ENCODE measurements at regions of chr14 and their contacts with region 1.

Region 1: GRCh38 chr14:69726761-69727511 is 40.0 kb upstream of the SRSF5 start:
- DNase-seq: peak; percentile 75 to 84 (median 80)
- ATAC-seq: peak; percentile 98
- H3K4me3 ChIP-seq: peak overlapping the region; percentile 32
- H3K27ac ChIP-seq: no peak overlapping the region
- H3K4me1 ChIP-seq: peaks cover 0 to 9% of the 10 kb centered on the region in 2 experiments; a peak in 3 of 5 replicates
- H3K27me3 ChIP-seq: no peaks in the 10 kb centered on the region
- CTCF ChIP-seq: peak; percentile 88 to 93 (median 89)
- EP300 ChIP-seq: no peak
- POLR2A ChIP-seq: no peak
- RAD21 ChIP-seq: peak; percentile 95 to 98

Region 2: DNA sequence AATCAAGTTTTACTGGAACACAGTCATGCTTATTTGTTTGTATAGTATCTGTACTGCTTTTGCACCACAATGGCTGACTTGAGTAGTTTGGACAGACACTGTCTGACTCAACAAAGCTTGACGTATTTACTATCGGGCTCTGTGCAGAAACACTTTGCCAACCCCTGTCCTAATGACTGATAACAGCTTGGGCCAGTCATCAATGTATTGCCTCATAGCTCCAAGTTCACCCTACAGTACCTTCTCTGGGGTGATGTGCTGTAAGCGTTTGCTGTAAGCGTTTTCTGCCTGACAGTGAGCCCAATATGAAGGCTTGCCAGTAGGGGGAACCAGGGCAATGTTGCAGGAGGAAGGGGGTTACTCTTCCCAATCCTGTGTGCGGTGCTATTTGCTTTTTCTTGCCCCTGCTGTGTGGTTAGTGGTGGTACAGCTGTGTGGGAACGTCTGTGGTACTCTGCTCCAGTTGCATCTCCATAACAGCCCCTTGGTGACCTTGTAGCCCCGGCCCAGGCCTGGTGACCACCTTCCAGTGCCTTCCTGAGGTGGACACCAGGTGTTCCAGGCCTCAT is 146.8 kb before region 1 on chr14:
- CTCF ChIA-PET with region 1: interaction called, 47 read pairs
- POLR2A ChIA-PET with region 1: no interaction called
- in situ Hi-C with region 1: loop called (anchors 5 kb)
- intact Hi-C with region 1: loop called (anchors 1 kb)
- DNase-seq: peak; percentile 50 to 73 (median 56)
- ATAC-seq: peak; percentile 96
- H3K4me3 ChIP-seq: no peak overlapping the region
- H3K27ac ChIP-seq: no peak overlapping the region
- H3K4me1 ChIP-seq: peaks cover 0 to 3% of the 10 kb centered on the region in 2 experiments; a peak in 1 of 5 replicates
- H3K27me3 ChIP-seq: peaks cover 0 to 8% of the 10 kb centered on the region in 2 experiments; a peak in 3 of 5 replicates
- CTCF ChIP-seq: peak; percentile 77 to 94 (median 87)
- EP300 ChIP-seq: peak; percentile 37; the same call in 1 of the 2 replicates
- POLR2A ChIP-seq: no peak
- RAD21 ChIP-seq: peak; percentile 40 to 72

Region 3: DNA sequence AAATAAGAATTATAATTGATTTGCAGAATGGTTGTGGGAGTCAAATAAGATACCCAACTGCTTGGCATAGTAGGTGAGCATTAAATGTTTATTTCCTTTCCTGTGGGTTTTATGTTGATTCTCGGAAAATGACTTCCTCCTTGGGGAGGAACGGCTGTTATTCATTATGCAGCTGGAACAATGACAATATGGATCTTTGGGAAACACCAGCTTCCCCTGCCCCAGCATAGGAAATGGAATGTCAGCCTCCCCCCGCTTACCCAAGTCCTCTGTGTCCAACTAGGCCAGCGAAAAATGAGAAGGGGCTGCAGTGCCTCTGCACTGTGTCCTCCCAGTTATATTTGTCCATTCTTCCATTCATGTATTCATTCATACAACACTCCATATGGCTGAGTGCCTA is 140.5 kb before region 1 on chr14:
- CTCF ChIA-PET with region 1: interaction called, 47 read pairs
- POLR2A ChIA-PET with region 1: no interaction called
- in situ Hi-C with region 1: loop called (anchors 5 kb)
- intact Hi-C with region 1: loop called (anchors 1 kb)
- DNase-seq: no peak
- ATAC-seq: no peak
- H3K4me3 ChIP-seq: no peak overlapping the region
- H3K27ac ChIP-seq: no peak overlapping the region
- H3K4me1 ChIP-seq: peaks cover 0 to 2% of the 10 kb centered on the region in 2 experiments; a peak in 2 of 5 replicates
- H3K27me3 ChIP-seq: no peaks in the 10 kb centered on the region
- CTCF ChIP-seq: no peak
- EP300 ChIP-seq: no peak
- POLR2A ChIP-seq: no peak
- RAD21 ChIP-seq: no peak

Region 4: GRCh38 chr14:69812714-69813113 is 85.8 kb after region 1 on chr14:
- CTCF ChIA-PET with region 1: no interaction called
- POLR2A ChIA-PET with region 1: no interaction called
- in situ Hi-C with region 1: loop called (anchors 5 kb)
- intact Hi-C with region 1: no loop called
- DNase-seq: peak in 1 of 4 experiments; percentile 21
- ATAC-seq: no peak
- H3K4me3 ChIP-seq: no peak overlapping the region
- H3K27ac ChIP-seq: no peak overlapping the region
- H3K4me1 ChIP-seq: no peaks in the 10 kb centered on the region
- H3K27me3 ChIP-seq: peaks cover 7 to 36% of the 10 kb centered on the region in 2 experiments; a peak in 3 of 5 replicates
- CTCF ChIP-seq: peak in 2 of 3 experiments; percentile 29 to 31; a peak in 1 of 6 replicates
- EP300 ChIP-seq: no peak
- POLR2A ChIP-seq: no peak
- RAD21 ChIP-seq: no peak; a peak in 1 of 4 replicates

Region 5: GRCh38 chr14:69818757-69819191 is 91.8 kb after region 1 on chr14:
- CTCF ChIA-PET with region 1: no interaction called
- POLR2A ChIA-PET with region 1: no interaction called
- in situ Hi-C with region 1: loop called (anchors 5 kb)
- intact Hi-C with region 1: loop called (anchors 2 kb)
- DNase-seq: peak; percentile 62 to 72 (median 72)
- ATAC-seq: peak; percentile 92
- H3K4me3 ChIP-seq: no peak overlapping the region
- H3K27ac ChIP-seq: no peak overlapping the region
- H3K4me1 ChIP-seq: no peaks in the 10 kb centered on the region
- H3K27me3 ChIP-seq: peaks cover 3 to 34% of the 10 kb centered on the region in 2 experiments; a peak in 3 of 5 replicates
- CTCF ChIP-seq: peak; percentile 65 to 85 (median 77)
- EP300 ChIP-seq: no peak
- POLR2A ChIP-seq: no peak
- RAD21 ChIP-seq: peak; percentile 61 to 83

Region 6: GRCh38 chr14:70013269-70013873 is 286.4 kb after region 1 on chr14:
- CTCF ChIA-PET with region 1: interaction called, 4 read pairs
- POLR2A ChIA-PET with region 1: no interaction called
- in situ Hi-C with region 1: no loop called
- intact Hi-C with region 1: loop called (anchors 5 kb)
- DNase-seq: peak; percentile 41 to 61 (median 50)
- ATAC-seq: peak; percentile 83
- H3K4me3 ChIP-seq: no peak overlapping the region
- H3K27ac ChIP-seq: no peak overlapping the region
- H3K4me1 ChIP-seq: no peaks in the 10 kb centered on the region
- H3K27me3 ChIP-seq: peaks cover 0 to 6% of the 10 kb centered on the region in 2 experiments; a peak in 2 of 5 replicates
- CTCF ChIP-seq: peak; percentile 62 to 79 (median 68)
- EP300 ChIP-seq: no peak
- POLR2A ChIP-seq: no peak
- RAD21 ChIP-seq: peak; percentile 18 to 47; a peak in 2 of 4 replicates

Region 7: GRCh38 chr14:70027785-70028428 is 301.0 kb after region 1 on chr14:
- CTCF ChIA-PET with region 1: interaction called, 14 read pairs
- POLR2A ChIA-PET with region 1: no interaction called
- in situ Hi-C with region 1: loop called (anchors 10 kb)
- intact Hi-C with region 1: loop called (anchors 1 kb)
- DNase-seq: peak; percentile 60 to 80 (median 76)
- ATAC-seq: peak; percentile 92
- H3K4me3 ChIP-seq: no peak overlapping the region
- H3K27ac ChIP-seq: no peak overlapping the region
- H3K4me1 ChIP-seq: no peaks in the 10 kb centered on the region
- H3K27me3 ChIP-seq: peaks cover 0 to 13% of the 10 kb centered on the region in 2 experiments; a peak in 1 of 5 replicates
- CTCF ChIP-seq: peak; percentile 75 to 80 (median 77)
- EP300 ChIP-seq: no peak
- POLR2A ChIP-seq: no peak
- RAD21 ChIP-seq: peak; percentile 68 to 82

Measured in K562 (cell line).